GM12878 (cell line): ENCODE measurements at regions of chr10 and their contacts with region 1.

Region 1: DNA sequence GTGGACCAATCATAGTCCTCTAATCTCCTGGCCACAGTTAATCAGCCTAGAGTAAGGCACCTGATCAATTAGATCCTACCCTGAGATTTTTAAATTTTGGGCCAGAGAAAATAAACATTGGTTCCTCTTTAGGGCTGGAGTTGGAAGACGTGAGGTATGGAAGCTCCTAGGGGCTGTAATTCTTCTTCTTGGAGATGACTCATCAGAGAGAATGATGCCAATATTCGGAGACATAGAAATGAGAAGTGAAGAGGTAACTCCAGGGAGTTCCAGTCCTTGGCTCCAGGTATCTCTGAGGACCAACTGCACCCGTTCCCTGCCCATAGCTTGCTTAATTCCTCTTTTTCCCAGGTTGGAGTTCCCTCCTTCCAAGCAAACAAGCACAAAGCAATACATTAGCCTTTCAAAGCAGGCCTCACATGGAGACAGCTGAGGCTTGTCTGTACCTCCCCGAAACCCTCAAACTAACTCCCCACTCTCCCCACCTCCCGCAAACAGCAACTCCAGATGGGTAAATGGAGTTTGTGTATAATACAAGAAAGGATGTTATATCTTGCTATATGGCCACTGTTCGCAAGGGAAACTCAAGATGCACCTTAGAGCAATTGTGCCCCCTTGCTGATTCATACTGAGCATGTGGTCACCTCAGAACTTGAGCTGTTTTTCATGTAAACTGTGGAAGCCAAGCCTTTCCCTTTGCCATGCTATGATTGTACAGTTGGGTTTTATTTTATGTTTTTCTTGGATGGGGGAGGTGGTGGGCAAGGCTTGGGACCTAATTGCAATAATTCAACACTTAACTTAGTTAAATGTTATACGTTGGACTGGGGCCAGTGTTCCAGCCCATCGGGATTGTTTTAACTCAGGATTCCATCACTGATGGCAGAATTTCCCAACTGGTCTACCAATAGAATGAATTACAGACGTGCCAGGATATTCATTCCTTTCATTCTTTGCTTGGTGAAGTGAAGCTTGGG is 29.3 kb downstream of the PIK3AP1 start:
- DNase-seq: no peak
- ATAC-seq: peak; percentile 64
- H3K4me3 ChIP-seq: no peak overlapping the region
- H3K27ac ChIP-seq: no peak overlapping the region
- H3K4me1 ChIP-seq: peaks cover 31% of the 10 kb centered on the region
- H3K27me3 ChIP-seq: no peaks in the 10 kb centered on the region
- CTCF ChIP-seq: peak in 1 of 3 experiments; percentile 35; a peak in 2 of 6 replicates
- EP300 ChIP-seq: no peak
- POLR2A ChIP-seq: no peak
- RAD21 ChIP-seq: peak; percentile 71

Region 2: DNA sequence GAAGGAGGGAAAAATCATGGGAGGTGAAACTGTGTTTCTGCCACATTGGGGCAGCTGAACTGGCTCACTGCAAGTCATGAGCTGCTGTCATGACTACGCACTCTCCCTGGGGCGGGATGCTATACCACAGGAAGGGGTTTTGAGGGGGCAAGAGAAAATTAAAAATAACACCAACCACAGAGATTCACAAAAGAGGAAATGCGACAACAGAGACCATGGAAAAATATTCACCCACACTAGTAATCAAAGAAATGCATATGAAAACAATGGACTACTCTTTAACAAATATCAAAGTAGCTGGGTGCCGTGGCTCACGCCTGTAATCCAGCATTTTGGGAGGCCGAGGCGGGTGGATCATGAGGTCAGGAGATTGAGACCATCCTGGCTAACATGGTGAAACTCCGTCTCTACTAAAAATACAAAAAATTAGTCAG is 39.0 kb before region 1 on chr10:
- CTCF ChIA-PET with region 1: interaction called, 24 read pairs
- POLR2A ChIA-PET with region 1: interaction called, 21 read pairs
- RAD21 ChIA-PET with region 1: interaction called, 33 read pairs
- SMC1A ChIA-PET with region 1: interaction called, 45 read pairs
- in situ Hi-C with region 1: no loop called
- intact Hi-C with region 1: no loop called
- DNase-seq: peak; percentile 79
- ATAC-seq: peak; percentile 89
- H3K4me3 ChIP-seq: no peak overlapping the region
- H3K27ac ChIP-seq: peak overlapping the region; percentile 79
- H3K4me1 ChIP-seq: peaks cover 50% of the 10 kb centered on the region
- H3K27me3 ChIP-seq: no peaks in the 10 kb centered on the region
- CTCF ChIP-seq: no peak
- EP300 ChIP-seq: peak; percentile 85 to 95
- POLR2A ChIP-seq: no peak
- RAD21 ChIP-seq: 0 out of 2 replicates have a peak, but pooled peaks have one; percentile 2

Region 3: GRCh38 chr10:96673318-96674099 is 17.5 kb before region 1 on chr10:
- CTCF ChIA-PET with region 1: interaction called, 10 read pairs
- POLR2A ChIA-PET with region 1: interaction called, 57 read pairs
- RAD21 ChIA-PET with region 1: interaction called, 4 read pairs
- SMC1A ChIA-PET with region 1: interaction called, 44 read pairs
- in situ Hi-C with region 1: no loop called
- intact Hi-C with region 1: no loop called
- DNase-seq: peak; percentile 67
- ATAC-seq: peak; percentile 80
- H3K4me3 ChIP-seq: peak overlapping the region; percentile 54; the same call in 1 of the 2 replicates
- H3K27ac ChIP-seq: peak overlapping the region; percentile 40
- H3K4me1 ChIP-seq: peaks cover 79% of the 10 kb centered on the region
- H3K27me3 ChIP-seq: no peaks in the 10 kb centered on the region
- CTCF ChIP-seq: no peak
- EP300 ChIP-seq: peak in 1 of 2 experiments; percentile 8; a peak in 1 of 4 replicates
- POLR2A ChIP-seq: no peak
- RAD21 ChIP-seq: no peak

Region 4: GRCh38 chr10:96714031-96714590 is 23.1 kb after region 1 on chr10:
- CTCF ChIA-PET with region 1: interaction called, 17 read pairs
- POLR2A ChIA-PET with region 1: interaction called, 15 read pairs
- RAD21 ChIA-PET with region 1: interaction called, 176 read pairs
- SMC1A ChIA-PET with region 1: interaction called, 68 read pairs
- in situ Hi-C with region 1: no loop called
- intact Hi-C with region 1: no loop called
- DNase-seq: no peak
- ATAC-seq: no peak
- H3K4me3 ChIP-seq: no peak overlapping the region
- H3K27ac ChIP-seq: no peak overlapping the region
- H3K4me1 ChIP-seq: peaks cover 33% of the 10 kb centered on the region
- H3K27me3 ChIP-seq: no peaks in the 10 kb centered on the region
- CTCF ChIP-seq: no peak
- EP300 ChIP-seq: no peak
- POLR2A ChIP-seq: no peak
- RAD21 ChIP-seq: no peak